ENCODE measurements at regions of chr6 and their contacts with region 1.

Region 1: DNA sequence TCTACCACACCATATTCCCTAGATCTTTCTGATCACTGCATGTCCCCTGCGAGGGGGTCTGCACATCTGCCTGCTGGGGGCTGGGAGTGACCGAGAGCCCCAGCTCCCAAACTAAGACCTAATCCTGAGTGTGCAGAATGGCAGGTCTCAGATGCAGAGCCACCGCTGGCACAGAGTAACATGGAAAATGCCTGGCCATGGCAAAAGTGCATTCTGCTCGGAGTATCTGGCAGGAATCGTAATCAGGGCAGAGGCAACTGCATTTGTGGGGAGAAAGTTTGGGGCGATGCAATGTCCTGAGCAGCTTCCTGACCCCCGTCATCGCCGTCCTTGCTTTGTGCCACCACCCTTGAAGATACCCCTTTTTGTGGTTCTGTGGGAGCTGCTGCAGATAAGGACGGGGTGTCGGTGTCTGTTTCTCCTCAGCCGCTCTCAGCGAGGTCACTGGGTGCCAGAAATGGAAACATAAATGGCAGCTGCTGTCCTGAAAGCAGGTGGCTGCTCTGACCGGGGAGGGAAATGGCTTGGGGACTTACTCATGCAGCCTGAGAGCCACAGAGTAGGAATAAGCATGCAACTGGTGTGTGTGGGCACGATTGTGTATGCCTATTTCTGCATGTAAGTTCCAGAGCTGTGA is 157.9 kb downstream of the LY86 start:
- DNase-seq: no peak
- ATAC-seq: no peak
- H3K4me3 ChIP-seq: no peak overlapping the region
- H3K4me3 Mint-ChIP-seq: no peak overlapping the region
- H3K27ac ChIP-seq: no peak overlapping the region
- H3K27ac Mint-ChIP-seq: no peak overlapping the region
- H3K4me1 ChIP-seq: no peaks in the 10 kb centered on the region
- H3K4me1 Mint-ChIP-seq: no peaks in the 10 kb centered on the region
- H3K27me3 ChIP-seq: peaks cover 0 to 4% (median 0%) of the 10 kb centered on the region in 4 experiments
- H3K27me3 Mint-ChIP-seq: peaks cover 18% of the 10 kb centered on the region
- CTCF ChIP-seq: no peak

Region 2: GRCh38 chr6:6758915-6759654 is 12.6 kb after region 1 on chr6:
- CTCF ChIA-PET with region 1: interaction called, 11 read pairs
- POLR2A ChIA-PET with region 1: no interaction called
- intact Hi-C with region 1: no loop called
- DNase-seq: peak; percentile 76
- ATAC-seq: peak; percentile 85
- H3K4me3 ChIP-seq: no peak overlapping the region
- H3K4me3 Mint-ChIP-seq: no peak overlapping the region
- H3K27ac ChIP-seq: no peak overlapping the region
- H3K27ac Mint-ChIP-seq: peak overlapping the region; percentile 29
- H3K4me1 ChIP-seq: peaks cover 13 to 16% of the 10 kb centered on the region in 2 donors
- H3K4me1 Mint-ChIP-seq: peaks cover 17% of the 10 kb centered on the region
- H3K27me3 ChIP-seq: peaks cover 0 to 5% (median 0%) of the 10 kb centered on the region in 4 experiments
- H3K27me3 Mint-ChIP-seq: peaks cover 10% of the 10 kb centered on the region
- CTCF ChIP-seq: peak; percentile 77